CD8-positive, alpha-beta T cell (primary cell): ENCODE measurements at regions of chr2 and their contacts with region 1.

Region 1: DNA sequence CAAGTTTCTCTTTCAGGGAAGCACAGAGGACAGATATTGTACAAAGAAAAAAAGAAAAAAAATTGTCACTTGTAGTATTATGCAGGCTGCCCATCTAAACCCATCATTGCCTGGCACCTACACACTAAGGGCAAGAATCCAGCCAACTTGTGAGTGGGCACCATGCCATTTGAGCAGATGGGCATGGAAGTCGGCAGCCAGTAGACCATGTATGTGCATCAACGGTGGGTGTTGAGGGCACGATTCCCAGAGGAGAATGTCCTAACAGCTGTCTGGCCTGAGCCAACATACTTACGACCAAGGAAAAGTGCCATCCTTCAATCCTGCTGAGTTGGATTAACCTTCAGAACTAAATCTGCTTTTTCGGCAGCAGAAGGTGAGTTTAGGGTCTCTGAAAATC is 63.9 kb downstream of the ARHGAP15 start:
- DNase-seq: no peak
- ATAC-seq: no peak
- H3K4me3 ChIP-seq: no peak overlapping the region
- H3K4me3 Mint-ChIP-seq: no peak overlapping the region
- H3K27ac ChIP-seq: no peak overlapping the region
- H3K27ac Mint-ChIP-seq: peak overlapping the region; percentile 62
- H3K4me1 ChIP-seq: peaks cover 11% of the 10 kb centered on the region
- H3K4me1 Mint-ChIP-seq: peaks cover 58% of the 10 kb centered on the region
- H3K27me3 ChIP-seq: no peaks in the 10 kb centered on the region
- H3K27me3 Mint-ChIP-seq: no peaks in the 10 kb centered on the region
- CTCF ChIP-seq: no peak

Region 2: GRCh38 chr2:142582317-142582716 is 610.8 kb before region 1 on chr2:
- CTCF ChIA-PET with region 1: no interaction called
- POLR2A ChIA-PET with region 1: no interaction called
- intact Hi-C with region 1: no loop called
- DNase-seq: no peak
- ATAC-seq: no peak
- H3K4me3 ChIP-seq: no peak overlapping the region
- H3K4me3 Mint-ChIP-seq: no peak overlapping the region
- H3K27ac ChIP-seq: no peak overlapping the region
- H3K27ac Mint-ChIP-seq: no peak overlapping the region
- H3K4me1 ChIP-seq: no peaks in the 10 kb centered on the region
- H3K4me1 Mint-ChIP-seq: no peaks in the 10 kb centered on the region
- H3K27me3 ChIP-seq: no peaks in the 10 kb centered on the region
- H3K27me3 Mint-ChIP-seq: no peaks in the 10 kb centered on the region
- CTCF ChIP-seq: no peak

Region 3: GRCh38 chr2:143110758-143111428 is 82.2 kb before region 1 on chr2:
- CTCF ChIA-PET with region 1: no interaction called
- POLR2A ChIA-PET with region 1: no interaction called
- intact Hi-C with region 1: no loop called
- DNase-seq: peak; percentile 16 to 87 (median 66)
- ATAC-seq: peak; percentile 88
- H3K4me3 ChIP-seq: no peak overlapping the region
- H3K4me3 Mint-ChIP-seq: no peak overlapping the region
- H3K27ac ChIP-seq: no peak overlapping the region
- H3K27ac Mint-ChIP-seq: peak overlapping the region; percentile 74
- H3K4me1 ChIP-seq: peaks cover 15% of the 10 kb centered on the region
- H3K4me1 Mint-ChIP-seq: peaks cover 24% of the 10 kb centered on the region
- H3K27me3 ChIP-seq: no peaks in the 10 kb centered on the region
- H3K27me3 Mint-ChIP-seq: no peaks in the 10 kb centered on the region
- CTCF ChIP-seq: peak; percentile 85

Region 4: GRCh38 chr2:143177096-143177786 is 15.9 kb before region 1 on chr2:
- CTCF ChIA-PET with region 1: no interaction called
- POLR2A ChIA-PET with region 1: interaction called, 4 read pairs
- intact Hi-C with region 1: loop called in 1 of 2 experiments (anchors 2 kb)
- DNase-seq: peak in 2 of 9 experiments; percentile 32 to 62
- ATAC-seq: peak; percentile 67
- H3K4me3 ChIP-seq: peak overlapping the region; percentile 25 to 36
- H3K4me3 Mint-ChIP-seq: peak overlapping the region; percentile 86
- H3K27ac ChIP-seq: peak overlapping the region; percentile 48 to 75
- H3K27ac Mint-ChIP-seq: peak overlapping the region; percentile 100
- H3K4me1 ChIP-seq: peaks cover 35% of the 10 kb centered on the region
- H3K4me1 Mint-ChIP-seq: peaks cover 68% of the 10 kb centered on the region
- H3K27me3 ChIP-seq: no peaks in the 10 kb centered on the region
- H3K27me3 Mint-ChIP-seq: no peaks in the 10 kb centered on the region
- CTCF ChIP-seq: no peak